OCI-LY7 (cell line): ENCODE measurements at regions of chr9 and their contacts with region 1.

Region 1: DNA sequence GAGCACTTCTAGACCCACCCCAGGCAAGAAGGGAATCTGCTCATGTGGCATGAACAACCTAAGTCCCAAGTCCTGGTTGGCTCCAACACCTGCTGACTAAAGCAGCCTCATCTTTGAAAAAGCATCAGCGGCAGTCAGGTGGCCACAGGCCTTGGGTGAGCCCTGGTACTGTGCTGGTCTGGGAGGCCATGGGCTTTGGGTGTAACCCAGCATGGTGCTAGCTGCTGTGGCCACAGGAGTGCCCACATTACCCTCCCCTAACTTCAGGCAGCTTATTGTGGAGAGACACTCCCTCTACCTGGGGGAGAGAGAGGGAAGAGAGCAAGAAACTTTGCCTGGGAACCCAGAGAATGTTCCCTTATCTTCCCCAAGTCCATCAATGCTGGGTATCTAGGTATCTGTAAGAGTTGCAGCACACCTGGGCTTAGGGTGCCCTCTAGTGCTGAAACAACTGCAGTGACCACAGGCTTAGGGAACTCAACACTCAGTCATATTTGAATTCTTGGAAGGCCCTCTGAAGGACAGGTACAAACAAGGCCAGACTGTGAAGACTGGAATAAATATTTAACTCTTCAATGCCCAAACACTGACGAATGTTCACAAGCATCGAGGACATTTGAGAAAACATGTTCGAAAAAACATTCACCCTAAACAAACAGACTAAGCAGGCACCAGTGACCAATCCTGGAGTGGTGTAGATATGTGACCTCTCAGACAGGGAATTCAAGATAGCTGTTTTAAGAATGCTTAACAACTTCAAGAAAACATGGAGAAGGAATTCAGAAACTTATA is 69.9 kb upstream of the OR2K2 start:
- DNase-seq: peak; percentile 24
- H3K4me3 ChIP-seq: no peak overlapping the region
- H3K27ac ChIP-seq: no peak overlapping the region
- H3K4me1 ChIP-seq: no peaks in the 10 kb centered on the region
- CTCF ChIP-seq: peak; percentile 75

Region 2: DNA sequence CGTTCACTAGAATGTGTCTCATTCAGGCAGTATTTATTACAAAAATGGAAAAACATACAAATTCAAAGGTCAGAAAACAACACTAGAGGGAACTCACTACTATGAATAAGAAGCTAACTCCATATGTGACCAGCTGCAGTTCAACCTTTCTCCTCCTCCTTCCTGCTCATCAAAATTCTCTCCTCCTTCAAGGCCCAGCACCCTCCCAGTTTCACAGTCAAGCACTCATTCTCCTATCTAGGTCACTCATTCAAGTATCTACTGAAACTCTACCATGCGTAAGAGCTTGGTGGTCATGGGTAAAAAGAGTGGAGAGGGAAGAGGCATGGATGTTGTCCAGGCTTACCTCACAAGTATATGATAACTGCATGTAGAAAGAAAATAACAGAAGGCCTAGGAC is 56.6 kb after region 1 on chr9:
- CTCF ChIA-PET with region 1: no interaction called
- POLR2A ChIA-PET with region 1: no interaction called
- intact Hi-C with region 1: no loop called
- DNase-seq: no peak
- H3K4me3 ChIP-seq: no peak overlapping the region
- H3K27ac ChIP-seq: no peak overlapping the region
- H3K4me1 ChIP-seq: peaks cover 7% of the 10 kb centered on the region
- CTCF ChIP-seq: no peak

Region 3: GRCh38 chr9:111501648-111502047 is 101.7 kb after region 1 on chr9:
- CTCF ChIA-PET with region 1: no interaction called
- POLR2A ChIA-PET with region 1: interaction called, 10 read pairs
- intact Hi-C with region 1: no loop called
- DNase-seq: no peak
- H3K4me3 ChIP-seq: no peak overlapping the region
- H3K27ac ChIP-seq: no peak overlapping the region
- H3K4me1 ChIP-seq: no peaks in the 10 kb centered on the region
- CTCF ChIP-seq: no peak

Region 4: DNA sequence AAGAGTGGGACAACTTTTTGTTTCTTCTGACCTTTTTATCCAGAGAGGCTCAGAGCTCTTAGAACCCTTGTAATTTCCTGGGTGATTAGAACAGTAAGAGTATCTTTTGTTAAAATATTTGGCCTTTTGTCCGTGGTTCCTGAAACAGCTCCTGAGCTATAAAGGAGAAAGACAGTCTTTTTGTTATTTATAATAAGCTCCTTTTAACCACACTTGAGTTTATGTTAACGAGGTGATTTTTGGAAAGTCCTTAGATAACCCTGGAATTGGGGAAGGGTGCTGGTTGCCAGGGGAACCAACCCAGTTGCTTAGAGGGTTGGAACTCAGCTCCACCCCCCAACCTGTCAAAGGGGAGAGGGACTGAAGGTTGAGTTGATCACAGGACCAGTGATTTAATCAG is 129.8 kb after region 1 on chr9:
- CTCF ChIA-PET with region 1: no interaction called
- POLR2A ChIA-PET with region 1: no interaction called
- intact Hi-C with region 1: no loop called
- DNase-seq: no peak
- H3K4me3 ChIP-seq: no peak overlapping the region
- H3K27ac ChIP-seq: no peak overlapping the region
- H3K4me1 ChIP-seq: no peaks in the 10 kb centered on the region
- CTCF ChIP-seq: no peak

Region 5: DNA sequence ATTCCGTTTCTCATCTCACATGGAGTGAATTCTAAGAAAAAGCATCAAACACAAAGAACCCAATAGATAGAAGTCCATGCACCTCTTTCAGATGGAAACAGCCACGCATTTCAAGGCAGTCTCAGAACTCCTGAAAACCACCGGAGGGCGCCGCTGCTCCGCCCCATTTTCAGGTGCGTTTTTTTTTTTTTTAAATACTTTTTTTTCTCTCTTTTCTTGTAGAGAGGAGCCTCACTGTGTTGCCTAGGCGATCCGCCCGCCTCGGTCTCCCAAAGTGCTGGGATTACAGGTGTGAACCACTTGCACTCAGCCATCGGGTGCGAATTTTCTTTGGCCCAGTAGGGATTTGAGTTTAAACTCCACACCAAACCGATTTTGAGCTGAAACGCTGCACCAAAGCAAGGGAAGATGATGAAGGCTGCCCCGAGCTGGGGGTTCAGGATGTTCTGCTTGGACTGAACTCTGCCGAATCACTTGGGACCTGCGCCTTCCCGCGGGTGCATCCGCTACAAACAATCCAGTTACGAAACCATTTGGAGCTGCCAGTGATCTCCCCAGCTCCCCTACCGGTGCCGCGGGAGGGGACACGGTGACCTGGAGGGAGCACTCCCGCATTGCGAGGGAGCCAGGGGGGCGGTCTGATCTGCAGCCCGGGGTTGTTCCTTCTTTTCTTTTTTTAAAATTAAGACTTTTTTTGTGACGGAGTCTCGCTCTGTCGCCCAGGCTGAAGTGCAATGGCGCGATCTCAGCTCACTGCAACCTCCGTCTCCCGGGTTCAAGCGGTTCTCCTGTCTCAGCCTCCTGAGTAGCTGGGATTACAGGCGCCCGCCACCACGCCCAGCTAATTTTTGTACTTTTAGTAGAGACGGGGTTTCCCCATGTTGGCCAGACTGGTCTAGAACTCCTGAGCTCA is 198.1 kb after region 1 on chr9:
- CTCF ChIA-PET with region 1: no interaction called
- POLR2A ChIA-PET with region 1: no interaction called
- intact Hi-C with region 1: no loop called
- DNase-seq: peak; percentile 66
- H3K4me3 ChIP-seq: peak overlapping the region; percentile 43
- H3K27ac ChIP-seq: no peak overlapping the region
- H3K4me1 ChIP-seq: peaks cover 4% of the 10 kb centered on the region
- CTCF ChIP-seq: peak; percentile 89